ENCODE measurements at regions of chr1 and their contacts with region 1.

Region 1: GRCh38 chr1:205791568-205792180 is 16.4 kb upstream of the RAB29 start:
- DNase-seq: peak; percentile 46
- ATAC-seq: peak; percentile 65
- H3K4me3 Mint-ChIP-seq: no peak overlapping the region
- H3K27ac Mint-ChIP-seq: peak overlapping the region; percentile 63
- H3K4me1 Mint-ChIP-seq: peaks cover 37% of the 10 kb centered on the region
- H3K27me3 Mint-ChIP-seq: no peaks in the 10 kb centered on the region
- CTCF ChIP-seq: no peak

Region 2: DNA sequence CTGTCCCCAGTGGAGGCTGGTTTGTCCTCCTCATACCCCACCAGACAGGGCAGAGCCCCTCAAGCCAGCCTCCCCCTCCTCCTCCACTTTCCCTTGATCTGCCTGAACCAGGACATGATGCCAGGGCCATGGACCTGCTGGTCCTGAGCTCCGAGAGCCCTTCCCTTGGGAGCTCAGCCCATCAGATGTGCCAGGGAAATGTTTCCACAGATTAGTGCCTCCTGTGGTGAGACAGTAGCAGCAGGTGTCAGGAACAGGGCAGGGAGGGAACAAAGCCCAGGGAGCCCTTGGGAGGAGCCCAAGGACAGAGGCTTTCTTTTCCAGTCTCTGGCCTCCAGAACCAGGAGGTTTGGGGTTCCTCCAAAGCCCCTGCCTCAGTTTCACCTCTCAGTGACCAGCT is 35.9 kb after region 1 on chr1:
- CTCF ChIA-PET with region 1: interaction called, 5 read pairs
- POLR2A ChIA-PET with region 1: interaction called, 4 read pairs
- intact Hi-C with region 1: loop called (anchors 1 kb)
- DNase-seq: no peak
- ATAC-seq: no peak
- H3K4me3 Mint-ChIP-seq: no peak overlapping the region
- H3K27ac Mint-ChIP-seq: no peak overlapping the region
- H3K4me1 Mint-ChIP-seq: peaks cover 41% of the 10 kb centered on the region
- H3K27me3 Mint-ChIP-seq: no peaks in the 10 kb centered on the region
- CTCF ChIP-seq: no peak

Region 3: GRCh38 chr1:205907794-205908193 is 116.1 kb after region 1 on chr1:
- CTCF ChIA-PET with region 1: interaction called, 23 read pairs
- POLR2A ChIA-PET with region 1: no interaction called
- intact Hi-C with region 1: loop called (anchors 1 kb)
- DNase-seq: no peak
- ATAC-seq: no peak
- H3K4me3 Mint-ChIP-seq: no peak overlapping the region
- H3K27ac Mint-ChIP-seq: no peak overlapping the region
- H3K4me1 Mint-ChIP-seq: peaks cover 8% of the 10 kb centered on the region
- H3K27me3 Mint-ChIP-seq: peaks cover 3% of the 10 kb centered on the region
- CTCF ChIP-seq: no peak

Region 4: GRCh38 chr1:205977402-205978014 is 185.8 kb after region 1 on chr1:
- CTCF ChIA-PET with region 1: interaction called, 255 read pairs
- POLR2A ChIA-PET with region 1: interaction called, 23 read pairs
- intact Hi-C with region 1: loop called (anchors 1 kb)
- DNase-seq: peak; percentile 65
- ATAC-seq: peak; percentile 95
- H3K4me3 Mint-ChIP-seq: no peak overlapping the region
- H3K27ac Mint-ChIP-seq: no peak overlapping the region
- H3K4me1 Mint-ChIP-seq: no peaks in the 10 kb centered on the region
- H3K27me3 Mint-ChIP-seq: peaks cover 2% of the 10 kb centered on the region
- CTCF ChIP-seq: peak; percentile 83

Region 5: GRCh38 chr1:206082831-206083695 is 291.4 kb after region 1 on chr1:
- CTCF ChIA-PET with region 1: no interaction called
- POLR2A ChIA-PET with region 1: no interaction called
- intact Hi-C with region 1: no loop called
- DNase-seq: no peak
- ATAC-seq: peak; percentile 60
- H3K4me3 Mint-ChIP-seq: no peak overlapping the region
- H3K27ac Mint-ChIP-seq: peak overlapping the region; percentile 85
- H3K4me1 Mint-ChIP-seq: peaks cover 39% of the 10 kb centered on the region
- H3K27me3 Mint-ChIP-seq: no peaks in the 10 kb centered on the region
- CTCF ChIP-seq: no peak

Measured in activated B cell treated with CpG ODN at 0.5 μM for 24 hours (primary cell).